Activated T-helper 2 cell treated with anti-CD3 and anti-CD28 coated beads, Interferon-gamma antibody, Interleukin-2, Interleukin-4, amounts not matched to agents 10 μg/mL and 5 μg/mL and 100 μg/mL, durations not matched to agents 14 hours and 24 hours and 36 hours (primary cell): ENCODE measurements at regions of chr1 and their contacts with region 1.

Region 1: DNA sequence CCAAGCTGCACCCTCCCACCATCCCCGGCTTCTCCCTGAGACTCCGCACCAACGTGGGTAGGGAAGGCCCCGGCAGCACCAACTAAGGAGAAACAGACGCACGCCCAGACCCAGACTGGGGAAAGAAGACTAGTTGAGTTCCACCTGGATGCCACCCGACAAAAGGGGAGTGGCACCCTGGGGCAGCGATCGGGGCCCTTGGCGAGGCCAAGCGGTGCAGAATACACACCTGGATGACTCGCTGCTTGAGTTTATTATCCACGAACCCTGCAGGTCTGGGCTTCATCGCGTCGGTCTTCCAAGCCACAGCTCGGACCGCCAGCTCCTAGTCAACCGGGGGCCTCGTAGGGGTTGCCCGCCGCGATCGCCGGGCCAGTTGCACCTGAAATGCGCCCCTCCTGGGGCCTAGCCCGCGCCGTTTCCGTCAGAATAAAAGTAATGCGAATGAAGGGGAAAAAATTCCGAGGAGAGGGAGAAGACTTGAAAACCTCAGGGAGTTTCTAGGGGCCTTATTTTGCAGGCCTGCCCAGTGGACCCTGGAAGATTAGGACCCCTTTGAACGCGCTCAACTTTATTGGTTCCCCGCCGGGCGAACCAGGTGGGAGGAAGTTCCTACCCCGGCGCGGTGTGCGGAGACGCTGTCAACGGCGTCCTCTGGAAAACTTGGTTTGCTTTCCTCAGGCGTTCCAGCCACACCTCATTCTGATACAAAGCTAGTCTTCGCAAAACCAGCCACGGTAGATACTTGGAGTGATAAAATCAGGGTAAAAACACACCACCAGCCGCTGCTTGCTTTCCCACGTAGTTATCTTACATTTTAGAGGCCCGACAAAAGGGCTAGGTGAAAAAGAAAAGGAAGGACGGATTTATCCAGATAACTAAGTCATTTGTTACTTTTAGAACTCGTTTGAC is at the start of gene NVL:
- DNase-seq: peak; percentile 74
- H3K4me3 Mint-ChIP-seq: peak within 1 kb of the TSS; percentile 97
- H3K27ac Mint-ChIP-seq: peak within 1 kb of the TSS; percentile 98
- H3K4me1 Mint-ChIP-seq: peaks cover 43% of the 10 kb centered on the region
- H3K27me3 Mint-ChIP-seq: no peaks in the 10 kb centered on the region
- total RNA-seq, gene NVL: 38.4 and 39.0 TPM in 2 replicates

Region 2: DNA sequence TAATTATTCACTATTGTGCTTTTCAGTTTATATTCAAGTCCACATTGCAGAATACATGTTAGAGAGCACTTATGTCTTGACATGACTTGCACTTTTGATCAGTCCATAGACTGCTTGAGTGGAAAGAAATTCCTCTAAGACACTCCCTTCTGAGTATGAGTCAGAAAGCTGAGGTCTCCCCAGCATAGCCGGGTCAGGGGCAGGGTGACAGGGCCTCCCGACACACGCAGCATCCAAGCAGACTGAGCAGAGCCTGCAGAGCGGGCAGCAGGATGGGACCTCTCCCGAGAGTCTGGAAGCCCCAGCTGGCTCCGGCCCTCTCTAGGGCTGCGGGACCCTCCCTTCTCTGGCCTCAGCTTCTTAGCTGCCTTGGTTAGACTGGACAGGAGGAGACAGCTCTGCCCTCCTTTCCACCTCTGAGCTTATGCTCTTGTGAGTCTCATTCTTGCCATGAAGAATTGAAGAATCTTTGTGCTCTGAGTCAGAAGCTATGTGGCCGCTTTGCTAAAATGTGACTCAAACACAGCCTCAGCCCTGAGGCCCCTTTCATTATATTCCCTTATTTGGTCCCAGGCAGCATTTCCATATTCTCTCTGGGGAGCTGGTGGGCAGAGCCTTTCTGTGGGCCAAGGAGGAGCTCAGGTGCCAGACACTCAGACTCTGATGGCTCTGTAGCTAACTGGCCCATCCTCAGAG is 629.0 kb before region 1 on chr1:
- intact Hi-C with region 1: loop called (anchors 5 kb)
- DNase-seq: no peak
- H3K4me3 Mint-ChIP-seq: no peak overlapping the region
- H3K27ac Mint-ChIP-seq: peak overlapping the region; percentile 87
- H3K4me1 Mint-ChIP-seq: peaks cover 45% of the 10 kb centered on the region
- H3K27me3 Mint-ChIP-seq: no peaks in the 10 kb centered on the region

Region 3: DNA sequence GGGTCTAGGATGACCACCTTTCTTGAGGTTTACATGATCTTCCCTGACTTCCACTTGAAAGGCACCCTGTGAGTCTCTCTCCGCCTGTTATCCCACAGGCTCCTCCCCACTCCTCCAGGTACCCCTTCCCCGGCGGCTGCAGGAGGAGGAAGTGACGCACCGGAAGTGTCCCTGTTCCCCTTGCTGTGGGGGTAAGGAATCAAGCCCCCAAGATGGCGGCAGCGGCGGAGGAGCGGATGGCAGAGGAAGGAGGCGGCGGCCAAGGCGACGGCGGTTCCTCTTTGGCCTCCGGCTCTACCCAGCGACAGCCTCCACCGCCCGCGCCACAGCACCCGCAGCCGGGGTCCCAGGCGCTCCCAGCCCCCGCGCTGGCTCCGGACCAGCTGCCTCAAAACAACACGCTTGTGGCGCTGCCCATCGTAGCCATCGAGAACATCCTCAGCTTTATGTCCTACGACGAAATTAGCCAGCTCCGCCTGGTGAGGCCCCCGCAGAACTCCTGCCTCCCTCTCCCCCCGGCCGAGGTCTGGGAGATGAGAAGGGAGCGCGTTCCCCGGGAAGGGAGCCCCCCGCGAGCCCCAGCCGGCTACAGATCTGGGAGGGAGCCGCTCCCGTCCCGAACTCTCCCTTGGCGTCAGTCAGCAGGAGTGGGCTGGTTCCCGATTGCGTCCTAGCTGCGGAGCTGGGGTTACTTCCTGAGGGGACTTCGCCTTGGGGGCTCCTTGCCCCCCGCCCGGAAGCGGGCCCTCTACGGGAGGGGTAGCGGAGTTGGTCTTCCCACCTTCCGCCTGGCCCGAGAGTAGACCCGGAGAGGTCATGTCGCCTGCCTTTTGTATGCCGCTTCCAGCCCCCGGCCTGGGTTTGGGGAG is 215.9 kb before region 1 on chr1 and contains the start of gene FBXO28:
- intact Hi-C with region 1: loop called (anchors 1 kb)
- DNase-seq: peak; percentile 90
- H3K4me3 Mint-ChIP-seq: peak within 1 kb of the TSS; percentile 80
- H3K27ac Mint-ChIP-seq: peak within 1 kb of the TSS; percentile 79
- H3K4me1 Mint-ChIP-seq: peaks cover 25% of the 10 kb centered on the region
- H3K27me3 Mint-ChIP-seq: peaks cover 17% of the 10 kb centered on the region
- total RNA-seq, gene FBXO28: 22.9 and 24.3 TPM in 2 replicates

Region 4: DNA sequence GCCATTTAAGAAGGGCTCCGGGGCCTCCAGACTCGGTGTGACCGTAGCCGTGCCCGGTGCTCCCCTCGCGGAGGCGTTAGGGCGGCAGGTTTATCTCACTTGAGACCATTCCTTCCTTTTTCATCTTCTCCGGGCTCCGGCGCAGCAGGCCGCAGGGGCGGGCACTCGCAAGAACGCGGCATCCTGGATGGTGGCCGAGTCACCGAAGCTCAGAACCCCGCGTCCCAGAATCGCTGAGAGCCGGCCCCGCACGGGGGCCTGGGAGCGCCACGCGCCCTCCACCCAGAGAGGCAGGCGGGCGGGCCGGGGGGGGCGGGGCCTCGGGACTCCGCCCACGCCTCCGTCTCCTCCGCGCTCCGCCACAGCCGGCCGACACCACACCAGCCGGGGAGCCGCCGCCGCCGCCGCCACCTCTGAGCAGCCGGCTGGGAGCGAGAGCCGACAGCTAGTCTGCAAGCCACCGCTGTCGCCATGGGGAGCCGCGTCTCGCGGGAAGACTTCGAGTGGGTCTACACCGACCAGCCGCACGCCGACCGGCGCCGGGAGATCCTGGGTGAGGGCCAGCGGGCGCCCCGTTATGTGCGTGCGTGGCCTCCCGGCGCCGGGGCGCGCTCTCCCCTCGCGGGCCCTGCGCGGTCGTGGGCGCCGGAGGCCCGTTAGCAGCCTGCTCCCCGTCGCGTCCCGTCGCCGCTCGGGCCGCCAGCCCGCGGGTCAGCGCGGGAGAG is 147.1 kb before region 1 on chr1 and contains the start of gene DEGS1:
- intact Hi-C with region 1: loop called (anchors 2 kb)
- DNase-seq: peak; percentile 81
- H3K4me3 Mint-ChIP-seq: peak within 1 kb of the TSS; percentile 93
- H3K27ac Mint-ChIP-seq: peak within 1 kb of the TSS; percentile 85
- H3K4me1 Mint-ChIP-seq: peaks cover 39% of the 10 kb centered on the region
- H3K27me3 Mint-ChIP-seq: peaks cover 6% of the 10 kb centered on the region
- total RNA-seq, gene DEGS1: 49.7 and 51.1 TPM in 2 replicates

Region 5: DNA sequence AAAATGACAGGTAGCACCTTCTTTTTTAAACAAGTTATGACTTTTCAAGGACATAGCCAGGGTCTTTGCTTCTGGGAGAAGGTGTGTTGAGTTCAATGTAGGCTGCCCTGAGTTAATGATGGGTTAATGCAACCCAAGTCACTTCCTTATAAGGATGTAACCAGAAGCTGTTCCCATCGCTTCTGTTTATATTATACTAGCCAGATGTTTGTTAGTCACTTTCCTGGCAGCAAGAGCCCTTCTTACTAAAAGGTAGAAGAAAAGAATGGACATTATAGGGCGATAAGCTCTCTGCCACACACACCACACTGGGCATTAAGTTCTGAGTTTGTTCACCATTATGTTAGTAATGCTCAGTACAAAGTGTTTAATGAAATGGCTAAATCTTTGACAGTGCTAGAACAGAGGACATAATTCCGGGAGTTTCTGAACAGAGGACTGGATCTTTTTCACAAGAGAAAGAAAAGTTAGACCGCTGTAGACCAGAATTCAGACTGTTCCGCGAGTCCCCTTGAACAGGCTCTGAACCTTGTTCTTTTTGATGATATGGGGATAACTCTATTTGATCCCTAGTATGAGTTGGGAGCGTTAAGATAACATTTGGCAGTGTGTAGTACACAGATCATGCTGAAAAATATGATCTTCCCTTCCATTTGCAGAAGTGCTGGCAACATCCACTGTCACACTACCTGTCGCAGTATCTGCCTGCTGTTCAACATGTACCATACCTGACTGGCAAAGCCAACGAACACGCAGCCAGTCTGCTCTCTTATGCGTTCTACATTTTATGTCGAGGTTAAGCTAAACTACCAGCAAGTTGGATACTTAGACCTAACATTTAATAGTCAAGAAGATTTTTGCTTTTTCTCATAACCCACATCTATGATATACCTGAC is 106.0 kb before region 1 on chr1:
- intact Hi-C with region 1: no loop called
- DNase-seq: no peak
- H3K4me3 Mint-ChIP-seq: no peak overlapping the region
- H3K27ac Mint-ChIP-seq: no peak overlapping the region
- H3K4me1 Mint-ChIP-seq: no peaks in the 10 kb centered on the region
- H3K27me3 Mint-ChIP-seq: no peaks in the 10 kb centered on the region

Region 6: GRCh38 chr1:224356685-224357625 is 26.9 kb after region 1 on chr1 and contains the start of gene CNIH4:
- intact Hi-C with region 1: loop called (anchors 1 kb)
- DNase-seq: peak; percentile 88
- H3K4me3 Mint-ChIP-seq: peak within 1 kb of the TSS; percentile 94
- H3K27ac Mint-ChIP-seq: peak within 1 kb of the TSS; percentile 89
- H3K4me1 Mint-ChIP-seq: peaks cover 32% of the 10 kb centered on the region
- H3K27me3 Mint-ChIP-seq: no peaks in the 10 kb centered on the region
- total RNA-seq, gene CNIH4: 60.2 and 60.7 TPM in 2 replicates

Region 7: GRCh38 chr1:224399887-224400286 is 69.8 kb after region 1 on chr1:
- intact Hi-C with region 1: no loop called
- DNase-seq: no peak
- H3K4me3 Mint-ChIP-seq: no peak overlapping the region
- H3K27ac Mint-ChIP-seq: peak overlapping the region; percentile 38
- H3K4me1 Mint-ChIP-seq: peaks cover 11% of the 10 kb centered on the region
- H3K27me3 Mint-ChIP-seq: no peaks in the 10 kb centered on the region

Region 8: DNA sequence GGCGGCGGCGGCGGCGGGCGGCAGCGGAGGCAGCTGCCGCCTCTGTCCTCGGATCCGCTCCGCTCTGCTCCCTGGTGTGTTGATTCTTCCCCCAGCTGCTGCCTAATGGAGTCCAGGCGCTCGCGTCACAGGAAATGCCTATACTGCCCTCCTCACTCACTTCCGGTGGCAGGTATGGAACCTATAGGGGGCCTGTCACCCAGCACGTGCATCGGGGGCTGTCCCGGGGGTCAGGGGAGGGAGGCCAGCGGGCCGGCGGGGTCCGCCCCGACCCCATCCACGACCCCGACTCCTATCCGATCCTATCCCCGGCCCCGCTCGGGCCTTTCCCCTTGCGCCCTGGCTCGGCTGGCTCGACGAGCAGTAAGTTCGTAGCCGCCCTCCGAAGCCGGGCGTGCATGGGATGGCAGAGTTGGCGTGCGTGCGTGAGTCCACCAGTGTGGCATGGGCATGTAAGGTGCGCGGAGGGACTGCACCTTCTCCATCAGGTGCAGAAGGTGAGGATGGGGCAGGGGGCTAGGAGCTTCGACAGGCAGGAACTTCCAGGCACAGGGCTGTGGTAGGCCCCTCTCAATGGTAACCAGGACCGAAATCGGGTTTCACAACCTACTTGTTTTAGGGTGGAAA is 104.7 kb after region 1 on chr1 and contains the start of gene WDR26:
- intact Hi-C with region 1: loop called (anchors 1 kb)
- DNase-seq: peak; percentile 83
- H3K4me3 Mint-ChIP-seq: peak within 1 kb of the TSS; percentile 90
- H3K27ac Mint-ChIP-seq: peak within 1 kb of the TSS; percentile 92
- H3K4me1 Mint-ChIP-seq: peaks cover 44% of the 10 kb centered on the region
- H3K27me3 Mint-ChIP-seq: no peaks in the 10 kb centered on the region
- total RNA-seq, gene WDR26: 80.5 and 82.0 TPM in 2 replicates

Region 9: GRCh38 chr1:224609333-224609732 is 279.2 kb after region 1 on chr1:
- intact Hi-C with region 1: no loop called
- DNase-seq: no peak
- H3K4me3 Mint-ChIP-seq: no peak overlapping the region
- H3K27ac Mint-ChIP-seq: no peak overlapping the region
- H3K4me1 Mint-ChIP-seq: no peaks in the 10 kb centered on the region
- H3K27me3 Mint-ChIP-seq: peaks cover 63% of the 10 kb centered on the region

Region 10: DNA sequence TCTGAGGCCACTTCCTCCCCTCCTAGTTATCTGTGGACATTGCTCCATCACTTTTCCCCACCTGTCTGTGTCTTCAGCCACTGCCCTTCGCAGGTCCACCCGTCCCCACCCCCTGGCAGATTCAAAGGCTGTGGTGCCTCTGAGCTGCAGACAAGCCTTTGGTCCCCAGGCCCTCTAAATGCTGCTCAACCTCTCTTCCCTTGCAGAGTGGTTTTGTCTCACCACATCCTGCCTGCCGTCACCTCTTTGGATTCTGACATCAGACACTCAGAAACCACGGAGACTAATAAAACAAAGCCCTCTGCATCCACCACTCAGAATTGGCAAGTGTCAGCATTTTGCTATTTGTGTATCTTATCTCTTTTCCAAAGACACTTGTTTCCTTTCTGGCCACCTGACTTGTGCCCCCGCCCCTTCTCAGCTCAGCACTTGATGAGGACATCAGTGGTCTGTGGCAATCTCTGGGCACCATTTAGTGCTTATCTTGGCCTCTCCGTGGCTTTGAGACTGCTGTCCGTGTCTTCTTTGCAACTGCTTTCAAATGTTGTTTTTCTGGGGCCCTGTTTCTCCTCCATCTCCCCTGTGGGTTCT is 293.7 kb after region 1 on chr1:
- intact Hi-C with region 1: loop called (anchors 10 kb)
- DNase-seq: peak; percentile 86
- H3K4me3 Mint-ChIP-seq: peak overlapping the region; percentile 65
- H3K27ac Mint-ChIP-seq: peak overlapping the region; percentile 91
- H3K4me1 Mint-ChIP-seq: peaks cover 39% of the 10 kb centered on the region
- H3K27me3 Mint-ChIP-seq: peaks cover 28% of the 10 kb centered on the region